ENCODE measurements at regions of chr2 and their contacts with region 1.

Region 1: GRCh38 chr2:230319211-230319862 is 7.7 kb upstream of the SP140L start:
- DNase-seq: peak; percentile 87 to 92 (median 87)
- H3K4me3 ChIP-seq: peak overlapping the region in 1 of 2 donors; percentile 27
- H3K4me3 Mint-ChIP-seq: peak overlapping the region; percentile 57 to 87 (median 82)
- H3K27ac ChIP-seq: peak overlapping the region; percentile 53
- H3K27ac Mint-ChIP-seq: peak overlapping the region; percentile 74 to 95 (median 93)
- H3K4me1 ChIP-seq: peaks cover 73% of the 10 kb centered on the region
- H3K4me1 Mint-ChIP-seq: peaks cover 58 to 92% (median 82%) of the 10 kb centered on the region in 4 donors
- H3K27me3 ChIP-seq: no peaks in the 10 kb centered on the region
- H3K27me3 Mint-ChIP-seq: no peaks in the 10 kb centered on the region

Region 2: DNA sequence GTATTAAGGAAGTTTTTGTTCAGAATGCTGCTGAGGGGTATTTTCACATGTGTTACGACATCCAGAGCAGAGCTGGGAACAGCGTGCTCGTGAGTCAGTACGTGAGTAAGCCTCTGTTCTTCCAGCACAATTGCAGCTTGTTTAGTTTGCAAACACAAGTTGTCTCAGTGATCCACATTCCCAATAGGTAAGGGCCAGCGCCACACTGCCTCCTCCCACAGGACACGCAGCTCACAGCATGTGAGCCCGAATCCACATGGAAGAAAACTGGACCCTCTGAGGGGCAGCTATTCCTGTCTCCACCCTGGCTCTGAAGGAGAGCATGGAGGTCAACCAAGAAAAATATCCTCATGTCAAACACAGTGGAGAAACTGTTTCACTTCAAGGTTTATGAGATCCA is 874.3 kb before region 1 on chr2:
- CTCF ChIA-PET with region 1: no interaction called
- POLR2A ChIA-PET with region 1: no interaction called
- intact Hi-C with region 1: no loop called
- DNase-seq: no peak
- H3K4me3 ChIP-seq: no peak overlapping the region
- H3K4me3 Mint-ChIP-seq: no peak overlapping the region
- H3K27ac ChIP-seq: no peak overlapping the region
- H3K27ac Mint-ChIP-seq: no peak overlapping the region
- H3K4me1 ChIP-seq: no peaks in the 10 kb centered on the region
- H3K4me1 Mint-ChIP-seq: no peaks in the 10 kb centered on the region
- H3K27me3 ChIP-seq: no peaks in the 10 kb centered on the region
- H3K27me3 Mint-ChIP-seq: peaks cover 9 to 13% of the 10 kb centered on the region in 2 donors

Region 3: DNA sequence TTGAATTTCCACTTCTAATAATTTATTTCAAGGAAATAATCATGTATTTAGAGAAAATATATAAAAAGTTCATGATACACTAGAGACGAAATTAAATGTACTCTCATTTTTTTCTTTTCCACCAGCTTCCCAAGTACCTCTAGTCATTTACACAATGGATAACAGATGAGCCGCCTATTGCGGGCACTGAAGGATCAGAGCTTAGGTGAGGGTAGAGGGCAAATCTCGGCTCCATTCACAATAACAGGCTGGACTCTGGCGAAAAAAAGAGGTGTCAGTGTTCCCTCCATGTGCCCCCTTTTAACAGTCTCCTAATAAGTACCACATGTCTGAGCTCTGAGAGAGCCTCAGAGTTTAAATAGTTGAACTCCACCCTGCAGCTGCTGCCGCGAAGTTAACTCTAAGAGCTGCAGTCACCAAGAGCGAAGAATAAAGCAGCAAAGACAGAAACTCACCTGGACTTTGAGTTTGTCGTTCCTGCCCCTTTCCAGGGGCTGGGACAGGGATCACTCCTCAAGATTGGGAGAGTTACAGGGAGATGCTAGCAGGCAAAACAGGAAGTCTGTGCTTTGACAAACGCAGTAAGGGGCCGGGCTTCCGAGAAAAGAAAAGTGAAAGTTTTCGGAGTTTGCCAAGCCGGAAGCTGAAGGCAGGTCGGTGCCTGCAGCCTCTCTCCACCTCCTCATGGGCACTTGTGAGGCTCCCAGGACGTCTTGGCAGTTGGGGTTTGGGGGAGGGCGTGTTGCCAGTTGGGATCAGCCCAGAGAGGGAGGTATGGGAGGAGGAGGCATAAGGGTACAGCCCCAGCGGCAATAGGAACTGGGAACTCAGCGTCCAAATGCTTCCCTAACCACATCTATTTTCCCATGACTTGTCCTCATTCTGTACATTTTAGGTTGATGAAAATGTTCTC is 99.7 kb before region 1 on chr2 and contains the start of gene SP110:
- CTCF ChIA-PET with region 1: interaction called, 5 read pairs
- POLR2A ChIA-PET with region 1: interaction called, 26 read pairs
- intact Hi-C with region 1: no loop called
- DNase-seq: peak; percentile 78 to 86 (median 81)
- H3K4me3 ChIP-seq: peak within 1 kb of the TSS; percentile 87 to 89
- H3K4me3 Mint-ChIP-seq: peak within 1 kb of the TSS; percentile 95 to 100 (median 99)
- H3K27ac ChIP-seq: peak within 1 kb of the TSS; percentile 86
- H3K27ac Mint-ChIP-seq: peak within 1 kb of the TSS; percentile 93 to 99 (median 98)
- H3K4me1 ChIP-seq: peaks cover 56% of the 10 kb centered on the region
- H3K4me1 Mint-ChIP-seq: peaks cover 47 to 75% (median 57%) of the 10 kb centered on the region in 4 donors
- H3K27me3 ChIP-seq: no peaks in the 10 kb centered on the region
- H3K27me3 Mint-ChIP-seq: no peaks in the 10 kb centered on the region
- total RNA-seq, gene SP110: 108 to 123 TPM

Region 4: GRCh38 chr2:230225486-230225885 is 93.9 kb before region 1 on chr2 and contains the start of gene SP140:
- CTCF ChIA-PET with region 1: interaction called, 5 read pairs
- POLR2A ChIA-PET with region 1: interaction called, 26 read pairs
- intact Hi-C with region 1: loop called (anchors 1 kb)
- DNase-seq: peak; percentile 86 to 97 (median 88)
- H3K4me3 ChIP-seq: peak within 1 kb of the TSS; percentile 39 to 68
- H3K4me3 Mint-ChIP-seq: peak within 1 kb of the TSS; percentile 88 to 97 (median 90)
- H3K27ac ChIP-seq: peak within 1 kb of the TSS; percentile 79
- H3K27ac Mint-ChIP-seq: peak within 1 kb of the TSS; percentile 96 to 99 (median 97)
- H3K4me1 ChIP-seq: peaks cover 60% of the 10 kb centered on the region
- H3K4me1 Mint-ChIP-seq: peaks cover 47 to 77% (median 56%) of the 10 kb centered on the region in 4 donors
- H3K27me3 ChIP-seq: no peaks in the 10 kb centered on the region
- H3K27me3 Mint-ChIP-seq: no peaks in the 10 kb centered on the region
- total RNA-seq, gene SP140: 70.8 to 79.3 TPM

Region 5: GRCh38 chr2:230254152-230254881 is 65.0 kb before region 1 on chr2:
- CTCF ChIA-PET with region 1: no interaction called
- POLR2A ChIA-PET with region 1: interaction called, 20 read pairs
- intact Hi-C with region 1: loop called (anchors 2 kb)
- DNase-seq: peak; percentile 75 to 82 (median 78)
- H3K4me3 ChIP-seq: peak overlapping the region in 1 of 2 donors; percentile 11
- H3K4me3 Mint-ChIP-seq: no peak overlapping the region
- H3K27ac ChIP-seq: no peak overlapping the region
- H3K27ac Mint-ChIP-seq: no peak overlapping the region
- H3K4me1 ChIP-seq: peaks cover 39% of the 10 kb centered on the region
- H3K4me1 Mint-ChIP-seq: peaks cover 8 to 14% (median 12%) of the 10 kb centered on the region in 4 donors
- H3K27me3 ChIP-seq: no peaks in the 10 kb centered on the region
- H3K27me3 Mint-ChIP-seq: no peaks in the 10 kb centered on the region

Region 6: DNA sequence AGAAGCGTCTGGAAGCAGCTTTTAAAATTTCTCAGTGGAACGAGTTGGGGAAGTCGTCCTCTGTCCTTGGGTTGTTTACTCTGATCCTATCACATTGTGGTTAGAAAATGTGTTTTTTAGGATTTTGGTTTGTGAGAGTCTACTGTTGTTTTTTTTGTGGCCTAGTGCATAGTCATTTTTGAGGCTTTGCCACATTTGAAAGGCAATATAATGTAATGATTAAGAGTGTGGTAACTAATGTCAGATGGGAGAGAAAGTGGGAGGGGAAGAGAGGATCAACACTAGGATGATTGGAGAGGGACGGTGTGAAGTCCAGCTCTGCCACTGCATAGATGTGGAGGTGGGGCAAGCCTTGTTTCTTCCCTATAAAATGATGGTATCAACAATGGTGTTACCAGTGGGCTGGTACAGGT is 16.1 kb after region 1 on chr2:
- CTCF ChIA-PET with region 1: interaction called, 5 read pairs
- POLR2A ChIA-PET with region 1: interaction called, 50 read pairs
- intact Hi-C with region 1: no loop called
- DNase-seq: no peak
- H3K4me3 ChIP-seq: no peak overlapping the region
- H3K4me3 Mint-ChIP-seq: peak overlapping the region; percentile 66 to 87 (median 76)
- H3K27ac ChIP-seq: peak overlapping the region; percentile 27
- H3K27ac Mint-ChIP-seq: peak overlapping the region; percentile 76 to 94 (median 87)
- H3K4me1 ChIP-seq: peaks cover 63% of the 10 kb centered on the region
- H3K4me1 Mint-ChIP-seq: peaks cover 53 to 68% (median 62%) of the 10 kb centered on the region in 4 donors
- H3K27me3 ChIP-seq: no peaks in the 10 kb centered on the region
- H3K27me3 Mint-ChIP-seq: no peaks in the 10 kb centered on the region

Region 7: GRCh38 chr2:230441227-230441897 is 122.0 kb after region 1 on chr2:
- CTCF ChIA-PET with region 1: no interaction called
- POLR2A ChIA-PET with region 1: no interaction called
- intact Hi-C with region 1: loop called (anchors 5 kb)
- DNase-seq: peak; percentile 62 to 82 (median 70)
- H3K4me3 ChIP-seq: no peak overlapping the region
- H3K4me3 Mint-ChIP-seq: peak overlapping the region; percentile 33 to 80 (median 67)
- H3K27ac ChIP-seq: peak overlapping the region; percentile 40
- H3K27ac Mint-ChIP-seq: peak overlapping the region; percentile 33 to 92 (median 89)
- H3K4me1 ChIP-seq: peaks cover 45% of the 10 kb centered on the region
- H3K4me1 Mint-ChIP-seq: peaks cover 39 to 64% (median 47%) of the 10 kb centered on the region in 4 donors
- H3K27me3 ChIP-seq: no peaks in the 10 kb centered on the region
- H3K27me3 Mint-ChIP-seq: no peaks in the 10 kb centered on the region

Region 8: DNA sequence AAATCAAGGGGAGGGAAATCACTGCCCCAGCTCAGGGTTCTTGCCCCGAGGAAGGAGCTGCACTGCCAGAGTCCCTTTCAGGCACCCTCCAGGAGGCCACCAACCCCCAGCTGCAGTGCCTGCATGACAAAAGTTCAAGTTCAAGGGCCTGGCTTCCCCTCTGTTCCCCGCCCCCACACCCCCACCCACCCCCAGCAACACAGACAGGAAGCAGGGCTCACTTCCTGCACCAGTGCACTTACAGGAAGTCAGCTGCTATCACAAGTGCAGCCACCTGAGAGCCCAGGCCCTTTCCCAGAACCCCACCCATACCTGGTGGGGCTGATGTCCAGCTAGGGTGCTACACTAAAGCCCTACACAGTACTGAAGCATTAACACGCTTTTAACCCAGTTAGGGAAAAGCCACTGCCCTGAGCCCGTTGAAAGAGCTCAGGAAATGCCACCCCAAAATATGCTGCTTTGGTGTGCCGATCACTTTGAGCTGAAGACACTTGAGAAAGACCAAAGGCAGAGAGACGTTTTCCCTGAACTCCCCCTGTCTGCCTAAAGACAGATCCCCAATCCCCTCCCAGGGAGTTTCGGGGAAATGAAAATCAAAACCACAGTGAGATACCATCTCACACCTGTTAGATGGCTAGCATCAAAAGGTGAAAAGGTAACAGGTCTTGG is 283.4 kb after region 1 on chr2:
- CTCF ChIA-PET with region 1: no interaction called
- POLR2A ChIA-PET with region 1: interaction called, 3 read pairs
- intact Hi-C with region 1: loop called (anchors 2 kb)
- DNase-seq: peak; percentile 49 to 71 (median 62)
- H3K4me3 ChIP-seq: peak overlapping the region; percentile 41 to 44
- H3K4me3 Mint-ChIP-seq: peak overlapping the region; percentile 36 to 85 (median 78)
- H3K27ac ChIP-seq: peak overlapping the region; percentile 59
- H3K27ac Mint-ChIP-seq: peak overlapping the region; percentile 81 to 99 (median 97)
- H3K4me1 ChIP-seq: peaks cover 63% of the 10 kb centered on the region
- H3K4me1 Mint-ChIP-seq: peaks cover 48 to 81% (median 63%) of the 10 kb centered on the region in 4 donors
- H3K27me3 ChIP-seq: no peaks in the 10 kb centered on the region
- H3K27me3 Mint-ChIP-seq: no peaks in the 10 kb centered on the region